ENCODE measurements at regions of chr2 and their contacts with region 1.

Region 1: DNA sequence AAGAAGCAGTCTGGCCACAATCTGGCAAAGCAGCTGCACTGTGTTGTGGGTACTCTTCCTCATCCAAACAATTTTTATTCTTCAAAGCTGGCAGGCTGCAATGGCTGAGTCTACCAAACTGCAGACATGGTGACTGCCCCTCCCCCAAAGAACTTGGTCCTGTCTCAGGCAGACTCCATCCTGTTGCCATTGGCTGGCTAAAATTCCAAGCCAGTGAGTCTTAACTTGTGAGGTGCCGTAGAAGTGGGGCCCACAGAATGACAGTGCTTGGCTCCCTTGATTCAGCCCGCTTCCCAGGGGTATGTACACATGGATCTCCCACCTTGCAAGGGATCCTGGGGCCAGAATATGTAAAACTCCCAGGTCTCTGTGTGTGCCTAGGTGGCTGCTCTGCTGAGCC is 14.5 kb upstream of the NXPH2 start:
- DNase-seq: no peak
- H3K4me3 ChIP-seq: no peak overlapping the region
- H3K27ac ChIP-seq: no peak overlapping the region
- H3K4me1 ChIP-seq: no peaks in the 10 kb centered on the region
- H3K27me3 ChIP-seq: no peaks in the 10 kb centered on the region
- CTCF ChIP-seq: no peak

Region 2: GRCh38 chr2:137847443-137847842 is 947.3 kb before region 1 on chr2:
- CTCF ChIA-PET with region 1: no interaction called
- POLR2A ChIA-PET with region 1: interaction called, 13 read pairs
- intact Hi-C with region 1: no loop called
- DNase-seq: peak in 1 of 2 experiments; percentile 79
- H3K4me3 ChIP-seq: peak overlapping the region; percentile 12; the same call in 1 of the 2 replicates
- H3K27ac ChIP-seq: peak overlapping the region; percentile 86
- H3K4me1 ChIP-seq: peaks cover 23% of the 10 kb centered on the region
- H3K27me3 ChIP-seq: no peaks in the 10 kb centered on the region
- CTCF ChIP-seq: no peak

Region 3: DNA sequence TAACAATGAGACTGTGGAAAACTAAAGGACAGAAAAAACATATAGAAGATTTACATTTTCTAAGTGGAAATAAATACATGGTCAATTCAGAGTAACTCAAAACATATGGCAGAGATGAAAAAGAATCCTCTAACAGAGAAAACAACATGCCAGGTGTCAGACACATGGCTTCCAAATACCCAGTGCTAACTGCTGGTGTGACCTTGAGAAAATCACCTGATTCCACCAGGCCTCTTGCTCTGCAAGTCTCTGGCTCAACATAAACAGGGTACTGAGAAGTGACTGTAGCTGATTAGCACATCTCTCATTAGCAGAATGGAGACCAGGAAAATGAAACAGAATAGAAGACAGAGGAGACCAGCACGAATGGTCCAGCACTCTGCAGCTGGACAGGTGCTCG is 619.7 kb before region 1 on chr2:
- CTCF ChIA-PET with region 1: no interaction called
- POLR2A ChIA-PET with region 1: no interaction called
- intact Hi-C with region 1: no loop called
- DNase-seq: no peak
- H3K4me3 ChIP-seq: no peak overlapping the region
- H3K27ac ChIP-seq: no peak overlapping the region
- H3K4me1 ChIP-seq: no peaks in the 10 kb centered on the region
- H3K27me3 ChIP-seq: no peaks in the 10 kb centered on the region
- CTCF ChIP-seq: no peak

Region 4: DNA sequence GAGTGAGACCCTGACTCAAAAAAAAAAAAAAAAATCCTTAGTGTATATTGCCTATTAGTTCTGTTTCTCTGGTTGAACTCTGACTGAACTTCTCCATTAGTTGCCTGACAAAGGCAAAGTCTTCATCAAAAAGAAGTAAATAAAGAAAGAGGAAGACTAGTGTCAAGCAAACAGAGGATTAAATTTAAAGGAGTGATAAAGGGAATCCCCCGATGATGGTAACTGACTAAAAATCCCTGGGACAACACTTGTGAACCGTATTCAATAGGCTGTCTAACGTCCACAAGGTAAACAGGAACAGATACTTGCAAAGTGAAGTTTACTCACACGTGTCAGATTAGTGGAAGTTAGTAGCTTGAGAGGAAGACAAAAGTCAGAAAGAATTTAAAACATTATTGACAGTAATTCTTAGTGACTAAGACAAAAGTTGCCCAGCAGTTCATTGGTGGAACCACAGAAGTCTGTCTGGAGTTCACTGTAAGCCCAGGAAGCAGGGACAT is 319.4 kb before region 1 on chr2:
- CTCF ChIA-PET with region 1: no interaction called
- POLR2A ChIA-PET with region 1: no interaction called
- intact Hi-C with region 1: no loop called
- DNase-seq: no peak
- H3K4me3 ChIP-seq: no peak overlapping the region
- H3K27ac ChIP-seq: no peak overlapping the region
- H3K4me1 ChIP-seq: no peaks in the 10 kb centered on the region
- H3K27me3 ChIP-seq: no peaks in the 10 kb centered on the region
- CTCF ChIP-seq: no peak

Region 5: GRCh38 chr2:138752197-138752956 is 42.4 kb before region 1 on chr2:
- CTCF ChIA-PET with region 1: no interaction called
- POLR2A ChIA-PET with region 1: no interaction called
- intact Hi-C with region 1: no loop called
- DNase-seq: peak in 1 of 2 experiments; percentile 53
- H3K4me3 ChIP-seq: no peak overlapping the region
- H3K27ac ChIP-seq: no peak overlapping the region
- H3K4me1 ChIP-seq: no peaks in the 10 kb centered on the region
- H3K27me3 ChIP-seq: no peaks in the 10 kb centered on the region
- CTCF ChIP-seq: no peak

Region 6: DNA sequence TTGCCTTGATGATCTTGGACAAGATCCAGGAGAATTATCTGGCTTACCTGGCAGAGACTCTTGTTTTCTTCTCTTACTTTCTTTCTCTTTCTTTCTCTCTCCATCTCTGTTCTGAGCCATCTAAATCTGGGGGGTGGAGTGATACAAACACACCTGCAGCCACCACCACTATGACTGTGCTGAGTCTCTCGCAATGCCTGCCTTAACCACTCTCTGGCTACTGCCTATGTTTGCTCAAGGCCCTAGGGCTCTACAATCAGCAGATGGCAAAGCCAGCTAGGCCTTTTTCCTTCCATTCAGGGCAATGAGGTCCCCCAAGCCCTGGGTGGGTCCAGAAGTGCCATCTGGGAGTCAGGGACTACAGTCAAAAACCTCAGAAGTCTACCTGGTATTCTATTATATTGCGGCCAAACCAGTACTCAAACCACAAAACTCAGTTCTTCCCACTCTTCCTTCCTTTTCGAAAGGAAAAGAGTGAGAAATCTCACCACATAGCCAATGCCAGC is 964.3 kb after region 1 on chr2:
- CTCF ChIA-PET with region 1: no interaction called
- POLR2A ChIA-PET with region 1: no interaction called
- intact Hi-C with region 1: no loop called
- DNase-seq: no peak
- H3K4me3 ChIP-seq: no peak overlapping the region
- H3K27ac ChIP-seq: no peak overlapping the region
- H3K4me1 ChIP-seq: no peaks in the 10 kb centered on the region
- H3K27me3 ChIP-seq: no peaks in the 10 kb centered on the region
- CTCF ChIP-seq: no peak